Transverse colon (tissue), 4 donors: ENCODE measurements at regions of chr4 and their contacts with region 1.

Region 1: DNA sequence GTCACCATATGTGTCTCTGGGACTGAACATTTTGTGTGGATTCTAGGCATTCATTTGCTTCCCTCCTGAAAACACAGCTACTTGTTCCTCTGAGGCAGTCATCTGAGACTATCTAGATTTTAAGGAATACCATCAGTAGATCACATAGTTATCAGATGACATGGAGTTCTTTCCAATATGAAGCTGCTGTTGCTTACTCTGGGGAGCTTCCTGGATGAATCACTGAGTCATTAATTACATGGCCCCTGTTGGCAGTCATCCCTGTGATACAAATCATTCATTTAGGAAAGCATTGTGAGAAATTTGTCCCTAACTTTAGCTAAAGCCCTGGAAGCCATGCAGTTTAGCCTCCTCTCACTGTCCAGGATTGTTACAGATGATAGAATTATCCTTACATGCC is 98.2 kb upstream of the ARSJ start:
- DNase-seq: no peak
- H3K4me3 ChIP-seq: no peak overlapping the region
- H3K27ac ChIP-seq: no peak overlapping the region
- H3K4me1 ChIP-seq: no peaks in the 10 kb centered on the region
- H3K27me3 ChIP-seq: no peaks in the 10 kb centered on the region
- CTCF ChIP-seq: no peak
- EP300 ChIP-seq: no peak
- POLR2A ChIP-seq: no peak

Region 2: DNA sequence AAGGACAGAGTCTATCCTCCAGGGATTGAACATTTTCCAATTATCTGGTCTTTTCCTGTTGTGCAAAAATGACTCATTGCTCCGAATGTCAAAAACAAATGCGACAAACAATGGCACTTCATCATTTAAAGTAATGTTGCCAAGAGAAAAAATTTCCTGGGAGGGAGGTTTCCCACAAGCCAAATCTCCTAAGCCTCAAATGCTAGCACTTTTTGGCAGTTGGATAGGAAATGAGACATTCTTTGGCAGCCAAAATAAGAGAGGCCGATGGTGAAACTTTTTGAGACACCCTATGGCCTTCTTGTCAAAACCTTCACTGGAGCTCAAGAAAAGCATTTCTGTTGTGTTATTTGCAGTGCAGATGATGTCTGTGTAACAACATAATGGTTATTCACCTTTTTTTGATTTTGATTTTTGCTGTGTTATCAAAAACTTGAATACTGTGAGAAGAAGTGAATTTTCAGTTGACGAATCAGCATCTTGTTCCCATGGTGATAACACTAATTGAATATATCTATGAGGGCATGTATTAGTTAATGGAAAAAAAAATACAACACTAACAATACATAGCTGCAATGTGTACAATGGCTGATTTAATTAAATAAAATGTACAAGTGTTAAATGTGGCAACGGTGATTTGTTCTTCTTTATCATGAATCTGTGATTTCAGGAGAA is 694.4 kb before region 1 on chr4:
- in situ Hi-C with region 1: loop called in 3 of 4 experiments (anchors 10 to 25 kb)
- intact Hi-C with region 1: no loop called
- DNase-seq: no peak
- H3K4me3 ChIP-seq: no peak overlapping the region
- H3K27ac ChIP-seq: peak overlapping the region in 1 of 4 donors; percentile 6
- H3K4me1 ChIP-seq: peaks cover 0 to 4% (median 3%) of the 10 kb centered on the region in 4 donors
- H3K27me3 ChIP-seq: no peaks in the 10 kb centered on the region
- CTCF ChIP-seq: no peak
- EP300 ChIP-seq: no peak
- POLR2A ChIP-seq: no peak

Region 3: DNA sequence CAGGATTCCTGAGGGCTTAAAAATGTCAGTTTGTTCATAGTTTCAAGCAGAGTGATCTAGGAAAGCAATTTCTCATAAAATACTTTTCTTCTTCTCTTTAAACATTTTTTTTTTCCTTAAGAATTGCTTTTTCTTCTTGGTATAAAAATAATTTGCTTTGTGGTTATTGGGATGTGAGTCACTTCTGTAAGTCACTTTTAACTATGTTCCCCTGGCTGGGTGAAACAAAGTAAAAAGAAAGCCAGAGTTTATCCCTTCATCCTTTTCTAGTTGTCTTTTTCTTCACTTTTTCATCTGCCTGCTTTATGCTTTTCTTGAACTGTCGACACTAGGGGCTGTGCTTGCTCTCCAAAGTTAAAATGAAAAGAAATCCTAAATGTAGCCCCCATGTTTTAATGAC is 131.7 kb before region 1 on chr4:
- in situ Hi-C with region 1: loop called in 2 of 4 experiments (anchors 10 to 25 kb)
- intact Hi-C with region 1: no loop called
- DNase-seq: no peak
- H3K4me3 ChIP-seq: no peak overlapping the region
- H3K27ac ChIP-seq: no peak overlapping the region
- H3K4me1 ChIP-seq: peaks cover 0 to 11% (median 3%) of the 10 kb centered on the region in 4 donors
- H3K27me3 ChIP-seq: no peaks in the 10 kb centered on the region
- CTCF ChIP-seq: no peak
- EP300 ChIP-seq: no peak
- POLR2A ChIP-seq: no peak